H1 (cell line): ENCODE measurements at regions of chr1 and their contacts with region 1.

Region 1: DNA sequence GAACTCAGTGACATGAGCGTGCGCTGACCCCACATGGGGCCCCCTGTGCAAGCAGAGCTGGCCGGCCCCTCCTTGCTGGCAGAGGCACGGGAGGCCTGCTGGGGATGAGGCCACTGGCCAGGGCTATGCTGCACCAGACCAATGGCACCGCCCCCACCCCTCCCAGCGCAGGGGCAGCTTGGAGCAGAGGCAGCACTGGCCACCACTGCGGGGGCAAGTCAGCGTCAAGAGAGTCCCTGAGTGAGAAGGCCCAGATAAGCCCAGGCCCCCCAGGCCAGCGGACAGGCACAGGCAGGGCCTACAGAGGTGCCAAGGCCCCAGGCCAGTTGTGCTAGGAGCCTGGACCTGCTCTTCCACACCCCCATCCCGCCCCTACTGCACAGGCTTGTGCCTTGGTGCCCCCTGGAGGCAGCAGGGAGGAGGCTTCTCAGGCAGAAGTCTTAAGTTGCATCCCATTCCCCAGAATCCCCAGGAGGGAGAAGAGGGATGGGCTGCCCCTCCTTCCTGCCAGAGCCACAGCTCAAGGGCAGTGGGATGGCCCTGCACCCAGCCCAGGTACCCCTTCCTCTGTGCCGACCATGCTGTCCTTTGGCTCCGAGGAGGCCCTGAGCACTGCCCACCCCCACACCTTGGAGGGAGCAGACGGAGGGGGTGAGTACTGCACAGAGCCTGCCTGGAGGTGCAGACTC is 35.8 kb downstream of the EPHX1 start:
- DNase-seq: peak; percentile 82 to 88
- H3K4me3 ChIP-seq: no peak overlapping the region
- H3K27ac ChIP-seq: no peak overlapping the region
- H3K4me1 ChIP-seq: peaks cover 0 to 8% (median 4%) of the 10 kb centered on the region in 4 experiments; a peak in 4 of 7 replicates
- H3K27me3 ChIP-seq: no peaks in the 10 kb centered on the region; a peak in 1 of 7 replicates
- CTCF ChIP-seq: peak; percentile 91 to 96 (median 94)
- EP300 ChIP-seq: no peak
- POLR2A ChIP-seq: no peak; a peak in 1 of 3 replicates
- RAD21 ChIP-seq: peak; percentile 93 to 96

Region 2: GRCh38 chr1:225660544-225660946 is 185.2 kb before region 1 on chr1:
- CTCF ChIA-PET with region 1: no interaction called
- POLR2A ChIA-PET with region 1: no interaction called
- DNase-seq: no peak
- H3K4me3 ChIP-seq: no peak overlapping the region
- H3K27ac ChIP-seq: no peak overlapping the region
- H3K4me1 ChIP-seq: no peaks in the 10 kb centered on the region
- H3K27me3 ChIP-seq: no peaks in the 10 kb centered on the region
- CTCF ChIP-seq: no peak
- EP300 ChIP-seq: no peak
- POLR2A ChIP-seq: no peak
- RAD21 ChIP-seq: no peak

Region 3: GRCh38 chr1:225772323-225772768 is 73.4 kb before region 1 on chr1:
- CTCF ChIA-PET with region 1: interaction called, 18 read pairs
- POLR2A ChIA-PET with region 1: interaction called, 10 read pairs
- DNase-seq: peak; percentile 67 to 86
- H3K4me3 ChIP-seq: no peak overlapping the region
- H3K27ac ChIP-seq: no peak overlapping the region
- H3K4me1 ChIP-seq: peaks cover 4 to 12% (median 9%) of the 10 kb centered on the region in 4 experiments; a peak in 5 of 7 replicates
- H3K27me3 ChIP-seq: no peaks in the 10 kb centered on the region; a peak in 1 of 7 replicates
- CTCF ChIP-seq: peak; percentile 92 to 98 (median 95)
- EP300 ChIP-seq: no peak
- POLR2A ChIP-seq: no peak
- RAD21 ChIP-seq: peak; percentile 98

Region 4: DNA sequence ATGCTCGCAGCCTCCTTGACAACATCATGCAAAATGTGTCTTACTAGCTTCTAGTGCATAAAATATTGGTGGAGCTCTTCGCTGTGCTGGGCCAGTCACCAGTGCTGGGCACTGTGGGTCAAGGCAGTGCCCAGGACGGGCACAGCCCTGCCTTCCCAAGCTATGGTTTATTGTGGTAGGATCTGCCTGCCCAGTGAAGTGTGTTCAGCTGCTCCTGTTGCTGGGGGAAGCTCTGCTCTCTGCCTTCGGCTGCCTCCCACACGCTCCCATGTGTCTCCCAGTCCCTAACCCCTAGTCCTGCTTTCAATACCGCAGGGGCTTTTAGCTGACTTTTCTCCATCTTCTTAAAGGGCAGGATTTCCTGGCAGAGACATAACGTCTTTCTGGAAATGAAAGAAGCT is 20.1 kb before region 1 on chr1:
- CTCF ChIA-PET with region 1: interaction called, 16 read pairs
- POLR2A ChIA-PET with region 1: interaction called, 15 read pairs
- DNase-seq: no peak
- H3K4me3 ChIP-seq: no peak overlapping the region
- H3K27ac ChIP-seq: no peak overlapping the region
- H3K4me1 ChIP-seq: peaks cover 6 to 17% (median 11%) of the 10 kb centered on the region in 4 experiments; a peak in 6 of 7 replicates
- H3K27me3 ChIP-seq: no peaks in the 10 kb centered on the region
- CTCF ChIP-seq: no peak
- EP300 ChIP-seq: no peak
- POLR2A ChIP-seq: no peak
- RAD21 ChIP-seq: no peak

Region 5: GRCh38 chr1:225860876-225861441 is 15.2 kb after region 1 on chr1:
- CTCF ChIA-PET with region 1: interaction called, 19 read pairs
- POLR2A ChIA-PET with region 1: interaction called, 11 read pairs
- DNase-seq: no peak
- H3K4me3 ChIP-seq: no peak overlapping the region
- H3K27ac ChIP-seq: no peak overlapping the region
- H3K4me1 ChIP-seq: no peaks in the 10 kb centered on the region
- H3K27me3 ChIP-seq: no peaks in the 10 kb centered on the region
- CTCF ChIP-seq: no peak
- EP300 ChIP-seq: no peak
- POLR2A ChIP-seq: no peak
- RAD21 ChIP-seq: 0 out of 4 replicates have a peak, but pooled peaks of 1 of the 2 experiments have one; percentile 1

Region 6: DNA sequence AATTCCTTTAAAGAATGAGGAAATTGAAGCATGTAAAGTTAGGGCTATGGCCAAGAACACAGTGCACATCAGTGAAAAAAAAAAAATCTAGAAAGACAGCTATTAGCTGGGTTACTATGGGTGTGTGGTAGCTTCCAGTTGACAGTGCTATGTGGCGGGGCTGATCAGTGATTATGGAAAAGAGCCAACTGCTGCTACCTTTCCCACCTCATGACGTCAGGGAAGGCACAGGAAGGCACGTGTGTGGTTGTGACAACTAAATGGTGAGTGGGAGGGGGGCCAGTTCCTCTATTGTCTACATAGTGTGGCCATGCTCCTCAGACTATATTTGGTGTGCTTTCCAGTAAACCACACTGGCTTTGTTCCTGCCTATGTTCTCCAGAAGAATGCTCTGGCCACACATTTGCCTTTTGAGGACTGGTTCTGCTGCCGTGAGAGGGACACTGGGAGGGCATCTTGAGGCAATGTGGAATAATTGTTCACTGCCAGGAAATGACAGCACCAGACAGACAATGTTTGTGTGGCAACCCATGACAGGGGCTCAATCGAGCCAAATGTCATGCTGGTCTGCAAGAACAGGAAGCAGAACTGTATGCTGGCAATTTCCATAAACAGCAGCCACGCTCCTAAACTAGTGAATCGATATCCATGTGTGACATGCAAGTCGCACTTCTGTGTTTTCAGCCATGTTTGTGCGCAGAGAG is 156.4 kb after region 1 on chr1:
- CTCF ChIA-PET with region 1: no interaction called
- POLR2A ChIA-PET with region 1: no interaction called
- DNase-seq: no peak
- H3K4me3 ChIP-seq: peak overlapping the region in 1 of 4 experiments; percentile 14; a peak in 1 of 8 replicates
- H3K27ac ChIP-seq: no peak overlapping the region
- H3K4me1 ChIP-seq: peaks cover 7 to 16% (median 13%) of the 10 kb centered on the region in 4 experiments
- H3K27me3 ChIP-seq: no peaks in the 10 kb centered on the region
- CTCF ChIP-seq: no peak
- EP300 ChIP-seq: no peak
- POLR2A ChIP-seq: no peak
- RAD21 ChIP-seq: no peak